ENCODE measurements at regions of chr21 and their contacts with region 1.

Region 1: GRCh38 chr21:35026617-35027562 is 22.2 kb downstream of the RUNX1 start:
- DNase-seq: peak; percentile 82 to 96 (median 88)
- ATAC-seq: peak; percentile 82
- H3K4me3 ChIP-seq: peak overlapping the region; percentile 44
- H3K4me3 Mint-ChIP-seq: peak overlapping the region; percentile 82
- H3K27ac ChIP-seq: peak overlapping the region; percentile 52 to 89
- H3K27ac Mint-ChIP-seq: peak overlapping the region; percentile 97
- H3K4me1 ChIP-seq: peaks cover 85% of the 10 kb centered on the region
- H3K4me1 Mint-ChIP-seq: peaks cover 95% of the 10 kb centered on the region
- H3K27me3 ChIP-seq: no peaks in the 10 kb centered on the region
- H3K27me3 Mint-ChIP-seq: no peaks in the 10 kb centered on the region
- CTCF ChIP-seq: no peak

Region 2: GRCh38 chr21:34974162-34974981 is 52.5 kb before region 1 on chr21:
- CTCF ChIA-PET with region 1: no interaction called
- POLR2A ChIA-PET with region 1: interaction called, 27 read pairs
- intact Hi-C with region 1: loop called in 1 of 2 experiments (anchors 5 kb)
- DNase-seq: peak in 11 of 14 experiments; percentile 18 to 87 (median 38)
- ATAC-seq: peak; percentile 85
- H3K4me3 ChIP-seq: peak overlapping the region; percentile 25
- H3K4me3 Mint-ChIP-seq: peak overlapping the region; percentile 88
- H3K27ac ChIP-seq: peak overlapping the region; percentile 29 to 36
- H3K27ac Mint-ChIP-seq: peak overlapping the region; percentile 92
- H3K4me1 ChIP-seq: peaks cover 47% of the 10 kb centered on the region
- H3K4me1 Mint-ChIP-seq: peaks cover 93% of the 10 kb centered on the region
- H3K27me3 ChIP-seq: no peaks in the 10 kb centered on the region
- H3K27me3 Mint-ChIP-seq: no peaks in the 10 kb centered on the region
- CTCF ChIP-seq: no peak

Region 3: GRCh38 chr21:35002879-35003722 is 23.8 kb before region 1 on chr21:
- CTCF ChIA-PET with region 1: interaction called, 3 read pairs
- POLR2A ChIA-PET with region 1: interaction called, 4 read pairs
- intact Hi-C with region 1: loop called in 1 of 2 experiments (anchors 2 kb)
- DNase-seq: no peak
- ATAC-seq: no peak
- H3K4me3 ChIP-seq: no peak overlapping the region
- H3K4me3 Mint-ChIP-seq: peak overlapping the region; percentile 8
- H3K27ac ChIP-seq: no peak overlapping the region
- H3K27ac Mint-ChIP-seq: peak overlapping the region; percentile 65
- H3K4me1 ChIP-seq: peaks cover 70% of the 10 kb centered on the region
- H3K4me1 Mint-ChIP-seq: peaks cover 98% of the 10 kb centered on the region
- H3K27me3 ChIP-seq: no peaks in the 10 kb centered on the region
- H3K27me3 Mint-ChIP-seq: no peaks in the 10 kb centered on the region
- CTCF ChIP-seq: no peak

Region 4: GRCh38 chr21:35045542-35046262 is 18.8 kb after region 1 on chr21:
- CTCF ChIA-PET with region 1: interaction called, 30 read pairs
- POLR2A ChIA-PET with region 1: interaction called, 227 read pairs
- intact Hi-C with region 1: loop called (anchors 1 to 2 kb)
- DNase-seq: peak in 12 of 14 experiments; percentile 29 to 91 (median 50)
- ATAC-seq: peak; percentile 40
- H3K4me3 ChIP-seq: peak overlapping the region; percentile 91
- H3K4me3 Mint-ChIP-seq: peak overlapping the region; percentile 96
- H3K27ac ChIP-seq: peak overlapping the region; percentile 74 to 93
- H3K27ac Mint-ChIP-seq: peak overlapping the region; percentile 97
- H3K4me1 ChIP-seq: peaks cover 67% of the 10 kb centered on the region
- H3K4me1 Mint-ChIP-seq: peaks cover 91% of the 10 kb centered on the region
- H3K27me3 ChIP-seq: no peaks in the 10 kb centered on the region
- H3K27me3 Mint-ChIP-seq: no peaks in the 10 kb centered on the region
- CTCF ChIP-seq: no peak

Region 5: DNA sequence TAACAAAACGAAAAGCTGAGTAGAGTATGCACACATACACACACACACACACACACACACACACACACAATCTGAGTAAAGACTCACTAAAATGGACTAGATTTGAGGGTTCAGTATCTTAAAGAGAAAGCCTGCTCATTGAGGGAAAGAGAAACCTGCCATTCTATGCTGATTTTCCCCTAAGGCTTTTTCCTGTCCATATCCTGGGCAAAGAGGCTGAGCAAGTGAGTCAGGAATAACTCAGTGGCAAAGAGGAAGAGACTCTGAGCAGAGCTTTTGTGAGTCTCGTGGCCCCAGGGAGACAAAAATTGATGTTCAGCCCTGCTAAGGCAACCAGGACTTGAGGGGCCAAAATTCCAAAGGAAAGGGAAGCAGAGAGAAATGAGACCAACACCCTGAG is 59.5 kb after region 1 on chr21:
- CTCF ChIA-PET with region 1: no interaction called
- POLR2A ChIA-PET with region 1: no interaction called
- intact Hi-C with region 1: no loop called
- DNase-seq: no peak
- ATAC-seq: no peak
- H3K4me3 ChIP-seq: no peak overlapping the region
- H3K4me3 Mint-ChIP-seq: no peak overlapping the region
- H3K27ac ChIP-seq: no peak overlapping the region
- H3K27ac Mint-ChIP-seq: no peak overlapping the region
- H3K4me1 ChIP-seq: no peaks in the 10 kb centered on the region
- H3K4me1 Mint-ChIP-seq: no peaks in the 10 kb centered on the region
- H3K27me3 ChIP-seq: no peaks in the 10 kb centered on the region
- H3K27me3 Mint-ChIP-seq: no peaks in the 10 kb centered on the region
- CTCF ChIP-seq: no peak

Region 6: GRCh38 chr21:35226948-35227744 is 200.3 kb after region 1 on chr21:
- CTCF ChIA-PET with region 1: no interaction called
- POLR2A ChIA-PET with region 1: no interaction called
- intact Hi-C with region 1: no loop called
- DNase-seq: peak in 13 of 14 experiments; percentile 12 to 82 (median 38)
- ATAC-seq: peak; percentile 88
- H3K4me3 ChIP-seq: peak overlapping the region; percentile 11
- H3K4me3 Mint-ChIP-seq: peak overlapping the region; percentile 5
- H3K27ac ChIP-seq: peak overlapping the region in 1 of 2 donors; percentile 25
- H3K27ac Mint-ChIP-seq: peak overlapping the region; percentile 85
- H3K4me1 ChIP-seq: peaks cover 30% of the 10 kb centered on the region
- H3K4me1 Mint-ChIP-seq: peaks cover 49% of the 10 kb centered on the region
- H3K27me3 ChIP-seq: no peaks in the 10 kb centered on the region
- H3K27me3 Mint-ChIP-seq: no peaks in the 10 kb centered on the region
- CTCF ChIP-seq: no peak

Measured in CD4-positive, alpha-beta T cell (primary cell).